Spleen (tissue), 13 donors: ENCODE measurements at regions of chr2 and their contacts with region 1.

Region 1: GRCh38 chr2:60550178-60550983 is 3.1 kb downstream of the BCL11A start:
- DNase-seq: peak; percentile 93
- H3K4me3 ChIP-seq: peak overlapping the region; percentile 55 to 94 (median 82)
- H3K27ac ChIP-seq: peak overlapping the region; percentile 38 to 92 (median 85)
- H3K4me1 ChIP-seq: peaks cover 4 to 98% (median 66%) of the 10 kb centered on the region in 6 donors
- H3K27me3 ChIP-seq: peaks cover 0 to 98% (median 24%) of the 10 kb centered on the region in 7 donors
- CTCF ChIP-seq: peak; percentile 47 to 80 (median 67)
- POLR2A ChIP-seq: no peak

Region 2: DNA sequence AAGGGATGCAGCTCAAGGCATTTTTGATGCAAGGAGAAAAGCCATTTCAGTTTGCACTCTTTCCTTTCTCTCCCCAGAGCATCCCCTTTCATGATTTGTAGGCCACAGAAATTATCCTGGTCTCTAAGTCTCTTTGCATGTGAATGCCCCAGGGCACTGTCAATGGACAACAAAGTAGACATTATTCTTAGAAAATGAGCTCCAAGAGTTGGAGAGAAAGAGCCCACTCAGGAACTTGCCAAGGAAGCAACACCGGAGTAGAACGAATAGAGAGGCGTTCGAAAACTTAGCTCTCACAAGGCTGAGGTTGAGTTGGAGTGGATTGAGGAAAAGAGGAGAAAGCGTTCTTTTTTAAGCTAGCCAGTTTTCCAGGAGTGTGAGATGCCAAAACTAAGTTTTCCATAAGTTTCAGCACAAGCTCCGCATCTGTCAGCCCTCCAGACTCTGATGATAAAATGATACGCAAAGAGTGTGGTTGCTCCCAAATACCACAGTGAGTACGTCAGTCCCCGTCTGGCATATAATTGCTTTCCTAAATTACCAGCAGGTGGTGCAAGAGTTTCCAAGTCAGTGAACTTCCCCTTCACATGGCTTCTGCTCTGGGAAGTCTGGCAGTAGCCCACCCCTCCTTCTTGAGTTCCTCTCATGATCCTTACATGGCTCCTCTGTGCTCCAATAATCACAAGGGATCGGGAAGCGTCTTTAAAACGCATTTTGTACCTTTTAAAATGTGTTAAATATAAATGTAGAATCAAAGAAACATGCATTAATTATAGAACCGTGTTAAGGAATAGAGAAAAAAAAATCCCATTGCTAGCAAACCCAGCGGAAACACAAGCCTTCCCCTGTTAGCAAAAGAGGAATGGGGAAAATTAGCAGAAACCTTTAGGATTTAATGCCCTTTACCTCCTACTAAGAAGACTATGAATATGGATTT is 1248.6 kb before region 1 on chr2:
- intact Hi-C with region 1: loop called (anchors 10 kb)
- DNase-seq: no peak
- H3K4me3 ChIP-seq: no peak overlapping the region
- H3K27ac ChIP-seq: no peak overlapping the region
- H3K4me1 ChIP-seq: peaks cover 0 to 7% (median 0%) of the 10 kb centered on the region in 6 donors
- H3K27me3 ChIP-seq: peaks cover 0 to 4% (median 0%) of the 10 kb centered on the region in 7 donors
- CTCF ChIP-seq: peak; percentile 19 to 76 (median 63)
- POLR2A ChIP-seq: no peak